Activated naive CD4-positive, alpha-beta T cell treated with anti-CD3 and anti-CD28 coated beads for 36 hours (primary cell): ENCODE measurements at regions of chr12 and their contacts with region 1.

Region 1: GRCh38 chr12:22658214-22658613 is 33.2 kb downstream of the ETNK1 start:
- DNase-seq: peak; percentile 54
- H3K4me3 Mint-ChIP-seq: peak overlapping the region; percentile 26
- H3K27ac Mint-ChIP-seq: peak overlapping the region; percentile 58
- H3K4me1 Mint-ChIP-seq: peaks cover 26% of the 10 kb centered on the region
- H3K27me3 Mint-ChIP-seq: no peaks in the 10 kb centered on the region

Region 2: DNA sequence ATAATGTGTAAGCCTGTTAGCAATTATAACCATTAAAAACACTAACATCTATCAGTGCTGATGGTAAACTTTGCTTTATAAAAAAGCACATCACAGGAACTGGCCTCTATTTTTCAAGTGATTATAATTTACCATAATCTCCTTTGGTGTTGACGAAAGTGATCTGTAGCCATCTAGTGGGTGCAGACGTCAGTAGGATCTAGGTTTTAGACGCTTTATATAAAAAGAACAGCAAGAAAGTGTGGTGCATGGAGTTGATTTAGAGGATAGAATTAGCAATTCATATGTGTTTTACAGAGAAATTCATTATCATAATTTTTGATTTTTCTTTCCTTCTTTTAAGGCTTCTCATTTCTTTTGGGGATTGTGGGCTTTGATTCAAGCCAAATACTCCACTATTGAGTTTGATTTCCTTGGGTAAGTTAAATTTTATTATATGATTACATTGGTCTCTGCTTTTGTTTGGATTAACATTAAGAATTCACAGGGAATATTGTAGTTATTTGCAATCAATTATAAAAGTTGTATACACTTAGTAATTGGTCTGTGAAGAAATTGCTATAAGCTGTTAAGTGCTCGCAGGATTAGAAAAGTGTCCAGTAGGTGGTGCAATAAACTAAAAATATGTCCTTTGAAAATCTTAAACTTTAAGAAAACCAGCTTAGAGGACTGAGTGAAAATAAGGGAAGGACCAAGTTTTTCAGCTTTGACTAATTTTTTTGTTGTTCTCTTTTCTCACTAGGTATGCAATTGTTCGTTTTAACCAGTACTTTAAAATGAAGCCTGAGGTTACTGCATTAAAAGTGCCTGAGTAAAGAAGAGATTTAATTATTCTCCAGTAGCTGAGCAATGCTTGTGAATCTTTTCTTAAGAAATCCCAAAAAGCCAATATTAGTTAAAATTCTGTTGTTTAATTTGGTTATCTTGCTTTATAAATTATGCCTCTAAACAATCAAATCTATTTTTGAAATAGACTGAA is 26.2 kb after region 1 on chr12:
- CTCF ChIA-PET with region 1: interaction called, 3 read pairs
- intact Hi-C with region 1: loop called (anchors 1 kb)
- DNase-seq: no peak
- H3K4me3 Mint-ChIP-seq: no peak overlapping the region
- H3K27ac Mint-ChIP-seq: no peak overlapping the region
- H3K4me1 Mint-ChIP-seq: peaks cover 4% of the 10 kb centered on the region
- H3K27me3 Mint-ChIP-seq: no peaks in the 10 kb centered on the region

Region 3: GRCh38 chr12:23361971-23362370 is 703.8 kb after region 1 on chr12:
- CTCF ChIA-PET with region 1: no interaction called
- intact Hi-C with region 1: no loop called
- DNase-seq: no peak
- H3K4me3 Mint-ChIP-seq: no peak overlapping the region
- H3K27ac Mint-ChIP-seq: no peak overlapping the region
- H3K4me1 Mint-ChIP-seq: no peaks in the 10 kb centered on the region
- H3K27me3 Mint-ChIP-seq: no peaks in the 10 kb centered on the region